HEK293 (cell line): ENCODE measurements at regions of chr12 and their contacts with region 1.

Region 1: DNA sequence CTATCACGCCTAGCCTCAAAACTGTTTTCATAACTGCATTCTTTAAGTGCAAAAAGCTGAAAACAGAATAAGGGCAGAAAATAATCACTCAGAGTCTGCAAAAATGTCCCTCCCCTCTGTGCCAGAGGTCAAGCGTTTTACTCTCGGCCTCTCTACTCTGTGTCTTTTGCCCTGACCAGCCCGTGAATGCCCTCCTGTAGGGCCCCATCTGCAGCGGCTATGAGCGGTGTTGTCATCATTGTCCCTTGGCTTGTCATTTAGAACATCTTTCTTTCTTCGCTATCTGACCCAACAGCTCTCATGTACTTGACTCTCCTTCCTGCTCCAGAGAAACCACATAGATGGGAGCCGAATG is 21.7 kb downstream of the ELK3 start:
- H3K4me3 ChIP-seq: no peak overlapping the region
- H3K27ac ChIP-seq: no peak overlapping the region
- H3K4me1 ChIP-seq: no peaks in the 10 kb centered on the region
- CTCF ChIP-seq: no peak

Region 2: GRCh38 chr12:96061864-96062453 is 153.9 kb before region 1 on chr12:
- CTCF ChIA-PET with region 1: interaction called, 29 read pairs
- POLR2A ChIA-PET with region 1: no interaction called
- H3K4me3 ChIP-seq: no peak overlapping the region
- H3K27ac ChIP-seq: no peak overlapping the region
- H3K4me1 ChIP-seq: no peaks in the 10 kb centered on the region
- CTCF ChIP-seq: peak; percentile 60

Region 3: DNA sequence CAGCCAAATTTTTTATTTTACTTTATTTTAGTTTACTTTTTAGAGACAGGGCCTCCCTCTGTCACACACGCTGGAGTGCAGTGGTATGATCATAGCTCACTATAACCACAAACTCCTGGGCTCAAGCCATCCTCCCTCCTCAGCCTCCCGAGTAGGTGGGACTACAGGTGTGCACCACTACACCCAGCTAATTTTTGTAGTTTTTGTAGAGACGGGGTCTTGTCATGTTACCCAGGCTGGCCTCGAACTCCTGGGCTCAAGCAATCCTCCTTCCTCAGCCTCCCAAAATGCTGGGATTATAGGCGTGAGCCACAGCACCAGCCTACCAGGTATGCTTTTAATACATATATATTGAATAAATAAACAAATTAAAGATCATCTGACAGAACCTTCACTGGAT is 147.8 kb before region 1 on chr12:
- CTCF ChIA-PET with region 1: interaction called, 16 read pairs
- POLR2A ChIA-PET with region 1: no interaction called
- H3K4me3 ChIP-seq: no peak overlapping the region
- H3K27ac ChIP-seq: no peak overlapping the region
- H3K4me1 ChIP-seq: no peaks in the 10 kb centered on the region
- CTCF ChIP-seq: no peak

Region 4: DNA sequence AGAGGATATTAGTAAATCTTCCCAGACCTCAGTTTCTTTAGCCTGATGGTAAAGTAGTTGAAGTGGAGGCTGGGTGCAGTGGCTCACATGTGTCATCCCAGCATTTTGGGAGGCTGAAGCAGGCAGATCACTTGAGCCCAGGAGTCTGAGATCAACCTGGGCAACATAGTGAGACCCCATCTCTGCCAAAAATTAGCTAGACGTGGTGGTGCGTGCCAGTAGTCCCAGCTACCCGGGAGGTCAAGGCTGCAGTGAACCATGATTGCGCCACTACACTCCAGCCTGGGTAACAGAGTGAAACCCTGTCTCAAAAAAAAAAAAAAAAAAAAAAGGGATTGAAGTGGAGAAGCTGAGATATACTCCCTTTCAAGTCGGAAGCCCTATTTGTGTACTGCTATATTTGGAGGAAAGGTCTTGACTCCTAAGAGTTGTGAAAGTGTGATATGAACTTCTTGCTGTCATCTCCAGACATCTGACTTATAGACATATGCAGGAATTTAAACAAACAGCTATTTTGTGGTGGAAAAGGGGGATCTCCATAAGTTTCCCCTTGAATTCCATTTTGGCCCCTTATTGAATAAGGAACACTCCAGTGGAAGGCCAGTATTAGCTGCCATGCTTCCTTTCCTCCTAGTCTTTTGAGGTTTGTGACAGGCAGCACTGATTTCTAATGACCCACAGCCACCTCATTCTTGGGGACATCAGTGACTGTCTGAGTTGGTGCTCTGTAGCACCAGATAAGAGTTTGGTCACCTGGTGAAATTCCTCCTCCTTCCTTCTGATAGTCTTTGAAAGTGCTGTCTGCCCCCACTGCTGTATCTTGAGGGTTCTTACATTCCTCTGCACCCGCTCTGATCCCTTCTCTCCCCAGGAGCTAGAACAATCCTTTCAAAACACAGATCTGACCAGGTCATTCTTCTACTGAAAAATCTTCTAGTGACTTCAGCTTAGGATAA is 14.3 kb before region 1 on chr12:
- CTCF ChIA-PET with region 1: interaction called, 10 read pairs
- POLR2A ChIA-PET with region 1: interaction called, 3 read pairs
- H3K4me3 ChIP-seq: no peak overlapping the region
- H3K27ac ChIP-seq: no peak overlapping the region
- H3K4me1 ChIP-seq: no peaks in the 10 kb centered on the region
- CTCF ChIP-seq: no peak

Region 5: DNA sequence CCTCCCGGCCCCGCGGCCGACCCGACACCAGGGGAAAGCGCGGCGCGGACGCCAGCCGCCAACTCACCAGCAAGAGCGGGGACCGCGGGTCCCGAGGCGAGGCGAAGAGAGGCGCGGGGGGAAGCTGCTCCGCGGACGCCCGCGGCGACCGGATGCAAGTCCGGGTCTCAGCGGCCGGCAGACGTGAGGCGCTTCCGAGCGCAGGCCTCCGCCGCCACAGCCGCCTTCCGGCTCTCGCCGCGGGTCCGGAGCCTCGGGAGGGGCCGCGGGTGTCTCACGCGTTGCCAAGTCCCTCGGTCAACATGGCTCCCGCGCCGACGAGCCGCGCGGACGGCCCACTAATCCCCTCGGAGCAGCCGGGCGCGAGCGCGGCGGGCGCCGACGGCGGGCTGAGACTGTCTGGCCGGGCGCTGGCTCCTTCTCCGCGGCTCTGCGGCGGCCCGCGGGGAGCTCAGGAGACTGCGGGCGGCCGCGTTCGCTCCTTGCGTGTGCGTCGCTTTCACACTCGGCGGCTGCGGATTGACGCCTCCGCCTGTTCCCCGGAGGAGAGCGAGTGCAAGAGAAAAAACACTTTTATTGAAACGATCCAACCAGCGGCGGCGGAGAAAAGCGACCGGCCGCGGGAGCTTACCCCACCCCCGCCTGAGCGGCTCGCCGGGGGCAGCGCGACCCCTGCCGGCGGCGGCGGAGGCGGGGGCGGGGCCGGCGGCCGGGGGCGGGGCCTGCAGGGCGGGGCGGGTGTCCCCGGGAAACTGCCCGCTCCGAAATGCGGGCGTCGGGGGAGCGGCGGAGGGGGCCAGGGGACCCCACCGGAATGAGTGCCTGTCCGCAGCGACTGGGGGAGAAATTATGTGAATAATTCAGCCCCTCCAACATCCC is 184.3 kb after region 1 on chr12 and contains the start of gene CDK17:
- CTCF ChIA-PET with region 1: interaction called, 19 read pairs
- POLR2A ChIA-PET with region 1: no interaction called
- H3K4me3 ChIP-seq: peak within 1 kb of the TSS; percentile 95
- H3K27ac ChIP-seq: peak within 1 kb of the TSS; percentile 99
- H3K4me1 ChIP-seq: peaks cover 4% of the 10 kb centered on the region; the same call in 1 of the 2 replicates
- CTCF ChIP-seq: no peak

Region 6: GRCh38 chr12:96516472-96517430 is 300.9 kb after region 1 on chr12:
- CTCF ChIA-PET with region 1: interaction called, 57 read pairs
- POLR2A ChIA-PET with region 1: interaction called, 3 read pairs
- H3K4me3 ChIP-seq: no peak overlapping the region
- H3K27ac ChIP-seq: no peak overlapping the region
- H3K4me1 ChIP-seq: no peaks in the 10 kb centered on the region
- CTCF ChIP-seq: peak; percentile 37; the same call in 1 of the 2 replicates